ENCODE measurements at regions of chr9 and their contacts with region 1.

Region 1: DNA sequence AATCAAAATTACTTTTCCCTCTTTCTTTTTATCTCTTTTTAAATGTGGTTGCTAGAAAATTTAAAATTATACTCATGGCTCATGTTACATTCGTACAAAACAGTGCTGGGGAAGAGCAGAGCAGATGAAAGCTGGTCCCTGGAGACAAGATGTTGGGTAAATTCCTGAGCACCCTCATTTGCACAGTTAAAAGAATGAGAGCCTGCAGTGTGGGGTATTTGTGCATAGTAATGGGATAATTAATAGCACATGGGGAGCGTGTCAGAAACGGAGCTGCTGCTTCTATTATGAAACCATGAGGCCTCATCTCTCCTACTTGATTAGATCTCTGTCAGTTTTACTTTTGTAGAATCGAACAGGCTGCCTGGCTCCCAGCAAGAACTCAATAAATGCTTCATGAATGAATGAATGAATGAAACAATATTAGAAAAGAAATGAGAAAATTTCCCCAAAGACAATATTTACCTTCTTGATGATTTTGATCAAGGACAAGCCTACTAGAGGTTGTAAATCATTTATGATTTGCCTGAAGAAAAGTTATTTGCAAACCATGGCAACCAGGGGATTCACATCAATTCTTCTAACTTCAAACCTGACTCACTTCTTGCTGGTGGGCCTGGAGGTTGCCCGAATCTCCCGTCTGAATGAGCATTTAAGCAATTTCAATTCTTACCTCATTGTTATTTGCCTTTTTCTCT is 177.2 kb upstream of the TUT7 start:
- DNase-seq: peak; percentile 95
- H3K4me3 ChIP-seq: no peak overlapping the region
- H3K27ac ChIP-seq: peak overlapping the region; percentile 90
- H3K4me1 ChIP-seq: peaks cover 71% of the 10 kb centered on the region
- H3K27me3 ChIP-seq: no peaks in the 10 kb centered on the region
- CTCF ChIP-seq: no peak

Region 2: GRCh38 chr9:87638292-87638691 is 1106.9 kb after region 1 on chr9:
- CTCF ChIA-PET with region 1: no interaction called
- POLR2A ChIA-PET with region 1: interaction called, 12 read pairs
- intact Hi-C with region 1: no loop called
- DNase-seq: no peak
- H3K4me3 ChIP-seq: no peak overlapping the region
- H3K27ac ChIP-seq: no peak overlapping the region
- H3K4me1 ChIP-seq: peaks cover 39% of the 10 kb centered on the region
- H3K27me3 ChIP-seq: no peaks in the 10 kb centered on the region
- CTCF ChIP-seq: no peak

Measured in A673 (cell line).